Calu3 (cell line): ENCODE measurements at regions of chr12 and their contacts with region 1.

Region 1: DNA sequence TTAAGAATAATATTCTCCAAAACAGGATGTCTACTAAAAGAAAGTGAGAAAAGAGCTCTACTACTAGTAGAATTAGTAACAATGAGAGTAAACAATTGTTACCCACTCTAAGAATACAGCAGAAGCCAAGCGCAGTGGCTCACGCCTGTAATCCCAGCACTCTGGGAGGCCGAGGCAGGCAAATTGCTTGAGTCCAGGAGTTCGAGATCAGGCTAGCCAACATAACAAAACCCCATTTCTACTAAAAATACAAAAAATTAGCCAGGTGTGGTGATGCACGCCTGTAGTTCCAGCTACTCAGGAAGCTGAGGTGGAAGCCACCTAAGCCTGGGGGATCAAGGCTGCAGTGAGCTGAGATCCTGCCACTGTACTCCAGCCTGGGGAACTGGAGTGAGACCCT is 4.7 kb downstream of the DNAJC14 start:
- DNase-seq: no peak
- H3K4me3 Mint-ChIP-seq: peak overlapping the region; percentile 8
- H3K27ac Mint-ChIP-seq: peak overlapping the region; percentile 50
- H3K4me1 Mint-ChIP-seq: peaks cover 46% of the 10 kb centered on the region
- H3K27me3 Mint-ChIP-seq: no peaks in the 10 kb centered on the region
- CTCF ChIP-seq: no peak

Region 2: DNA sequence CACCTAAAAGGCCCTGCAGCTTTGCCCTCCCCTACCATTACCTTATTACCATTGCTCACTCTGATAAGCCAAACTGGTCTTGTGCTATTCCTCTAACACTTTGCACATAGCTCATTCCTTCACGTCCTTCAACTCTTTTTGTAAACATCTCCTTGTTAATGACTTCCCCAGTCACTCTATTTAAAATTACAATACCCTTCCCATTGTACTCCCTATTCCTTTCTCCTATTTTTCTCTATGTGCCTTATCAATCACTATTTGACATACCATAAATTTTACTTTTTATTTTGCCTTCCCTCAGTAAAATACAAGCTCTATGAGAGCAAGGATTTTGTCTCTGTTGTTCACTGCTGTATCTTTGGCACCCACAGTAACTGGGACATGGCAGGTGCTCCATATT is 12.6 kb before region 1 on chr12:
- CTCF ChIA-PET with region 1: interaction called, 21 read pairs
- intact Hi-C with region 1: no loop called
- DNase-seq: no peak
- H3K4me3 Mint-ChIP-seq: no peak overlapping the region
- H3K27ac Mint-ChIP-seq: no peak overlapping the region
- H3K4me1 Mint-ChIP-seq: peaks cover 28% of the 10 kb centered on the region
- H3K27me3 Mint-ChIP-seq: no peaks in the 10 kb centered on the region
- CTCF ChIP-seq: no peak